BJ (cell line): ENCODE measurements at regions of chr20 and their contacts with region 1.

Region 1: DNA sequence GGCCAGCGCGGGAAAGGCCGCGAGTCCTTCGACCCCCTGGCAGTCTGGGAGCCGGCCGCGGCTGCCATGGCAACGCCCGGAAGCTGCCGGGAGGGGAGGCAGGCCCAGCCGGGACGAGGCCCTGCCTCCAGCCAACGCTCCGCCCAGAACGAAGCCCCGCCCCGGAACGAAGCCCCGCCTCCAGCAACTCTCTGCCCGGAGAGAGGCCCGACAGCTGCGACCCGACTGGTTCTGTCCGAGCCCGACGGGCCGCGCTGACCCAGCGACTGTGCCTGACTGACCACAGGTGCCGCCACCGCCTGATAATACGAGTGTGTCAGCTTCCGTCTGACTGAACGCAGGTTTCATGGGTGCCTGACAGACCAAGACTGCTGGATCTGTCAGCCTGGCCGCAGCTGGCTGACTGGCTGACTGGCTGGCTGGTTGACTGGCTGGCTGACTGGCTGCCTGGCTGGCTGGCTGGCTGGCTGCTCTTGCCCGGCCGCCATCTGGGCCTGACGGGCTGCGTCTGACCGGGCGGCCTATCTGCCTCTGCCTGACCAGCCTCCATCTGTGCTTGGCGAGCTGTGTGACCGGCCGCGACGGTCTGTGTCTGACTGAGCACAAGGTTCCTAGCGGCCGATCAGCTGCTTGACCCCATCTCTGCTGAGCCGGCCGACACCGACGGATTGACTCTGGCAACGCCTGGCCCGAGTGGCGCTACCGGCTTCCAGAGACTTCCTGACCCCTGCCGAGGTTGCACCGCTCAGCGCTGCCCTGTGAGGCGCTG is 89.7 kb upstream of the EPB41L1 start:
- DNase-seq: peak; percentile 47
- H3K4me3 ChIP-seq: peak overlapping the region; percentile 64
- H3K27me3 ChIP-seq: 0 out of 2 replicates have a peak, but pooled peaks cover 2% of the 10 kb centered on the region
- CTCF ChIP-seq: no peak

Region 2: DNA sequence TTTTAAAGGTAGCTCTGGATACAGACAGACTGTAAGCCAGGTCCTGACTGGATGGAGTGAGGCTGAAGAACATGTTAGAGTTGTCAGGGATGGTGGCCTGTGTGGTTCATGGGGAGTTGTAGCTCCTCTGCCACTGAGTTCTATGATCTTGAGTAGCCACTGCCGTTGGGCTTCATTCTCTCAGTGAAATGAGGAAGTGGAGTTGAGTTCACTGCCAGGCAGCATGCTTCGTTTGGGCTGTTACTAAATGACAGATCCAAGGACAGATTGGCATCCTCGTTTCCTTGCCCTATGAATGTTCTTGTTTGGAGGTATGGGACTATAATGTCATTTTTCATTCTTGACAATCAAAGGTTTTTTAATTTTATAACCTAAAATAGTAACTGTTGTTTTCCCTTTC is 147.8 kb before region 1 on chr20:
- CTCF ChIA-PET with region 1: no interaction called
- POLR2A ChIA-PET with region 1: no interaction called
- DNase-seq: no peak
- H3K4me3 ChIP-seq: no peak overlapping the region
- H3K27me3 ChIP-seq: no peaks in the 10 kb centered on the region
- CTCF ChIP-seq: no peak

Region 3: GRCh38 chr20:36043892-36044515 is 20.8 kb before region 1 on chr20:
- CTCF ChIA-PET with region 1: no interaction called
- POLR2A ChIA-PET with region 1: no interaction called
- DNase-seq: no peak
- H3K4me3 ChIP-seq: no peak overlapping the region
- H3K27me3 ChIP-seq: no peaks in the 10 kb centered on the region
- CTCF ChIP-seq: no peak

Region 4: DNA sequence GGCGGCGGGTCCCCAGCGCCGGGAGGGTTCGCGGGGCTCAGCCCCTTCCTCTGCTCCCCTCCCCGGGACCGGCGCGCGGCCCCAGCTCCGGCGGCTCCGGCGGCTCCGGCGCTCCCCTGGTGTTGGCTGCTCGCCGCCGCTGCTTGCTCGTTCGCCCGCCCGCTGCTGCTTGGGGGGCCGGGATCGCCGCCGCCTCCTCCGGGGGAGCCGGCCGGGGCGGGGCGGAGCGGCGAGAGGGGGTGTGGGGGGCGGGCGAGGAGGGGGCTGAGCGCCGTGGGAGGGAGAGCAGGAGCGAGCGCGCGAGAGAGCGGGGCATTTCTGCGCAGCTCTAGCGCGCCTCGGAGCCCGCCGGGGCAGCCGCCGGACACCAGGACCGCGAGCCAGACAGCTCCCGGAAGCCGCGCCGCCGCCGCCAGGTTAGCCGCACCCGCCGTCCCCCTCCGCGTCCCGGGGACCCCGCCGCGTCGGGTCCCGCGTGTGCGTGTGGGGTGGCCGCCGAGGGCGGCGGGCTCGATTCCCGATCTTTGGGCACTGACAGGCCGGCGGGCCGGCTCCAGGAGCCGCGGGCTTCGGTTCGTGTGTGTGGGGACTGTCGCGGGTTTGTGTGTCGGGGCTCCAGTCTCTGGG is 27.7 kb after region 1 on chr20:
- CTCF ChIA-PET with region 1: no interaction called
- POLR2A ChIA-PET with region 1: interaction called, 20 read pairs
- DNase-seq: no peak
- H3K4me3 ChIP-seq: peak overlapping the region; percentile 63
- H3K27me3 ChIP-seq: peaks cover 10% of the 10 kb centered on the region
- CTCF ChIP-seq: no peak